Caco-2 (cell line): ENCODE measurements at regions of chr19 and their contacts with region 1.

Region 1: DNA sequence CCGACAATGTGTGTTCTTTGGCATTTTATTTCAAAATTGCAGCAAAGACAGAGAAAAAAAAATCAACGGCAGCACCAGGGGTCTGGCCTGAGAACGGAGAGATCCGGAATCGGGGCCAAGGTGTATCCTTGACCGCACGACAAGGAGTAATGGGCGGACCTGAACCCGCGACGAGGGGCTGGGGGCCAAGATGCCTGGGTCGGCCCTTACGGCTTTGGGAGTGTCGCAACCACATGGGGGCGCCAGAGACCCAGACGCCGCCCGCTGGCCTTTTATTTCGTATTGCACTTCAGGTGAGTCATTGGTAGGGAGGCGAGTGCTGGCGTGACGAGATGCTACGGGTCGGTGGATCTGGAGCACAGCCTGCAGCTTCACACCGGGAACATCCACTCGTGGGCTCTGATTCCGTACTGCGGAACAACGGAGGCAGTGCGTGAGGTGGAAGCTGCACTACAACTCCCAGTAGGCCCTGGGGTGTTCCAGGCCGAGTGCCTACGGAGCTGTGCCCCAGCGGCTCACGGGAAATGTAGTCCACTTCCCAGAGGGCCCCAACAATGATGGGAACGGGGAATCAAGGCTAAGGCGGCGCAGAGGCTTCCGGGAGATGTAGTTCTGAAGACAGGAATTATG is 15.7 kb downstream of the BCAT2 start:
- DNase-seq: peak; percentile 95
- H3K4me3 ChIP-seq: peak overlapping the region; percentile 55
- H3K4me3 Mint-ChIP-seq: peak overlapping the region; percentile 83
- H3K27ac Mint-ChIP-seq: peak overlapping the region; percentile 79
- H3K4me1 ChIP-seq: peaks cover 8% of the 10 kb centered on the region
- H3K4me1 Mint-ChIP-seq: peaks cover 13% of the 10 kb centered on the region
- H3K27me3 ChIP-seq: no peaks in the 10 kb centered on the region
- H3K27me3 Mint-ChIP-seq: no peaks in the 10 kb centered on the region
- CTCF ChIP-seq: peak; percentile 94 to 95

Region 2: DNA sequence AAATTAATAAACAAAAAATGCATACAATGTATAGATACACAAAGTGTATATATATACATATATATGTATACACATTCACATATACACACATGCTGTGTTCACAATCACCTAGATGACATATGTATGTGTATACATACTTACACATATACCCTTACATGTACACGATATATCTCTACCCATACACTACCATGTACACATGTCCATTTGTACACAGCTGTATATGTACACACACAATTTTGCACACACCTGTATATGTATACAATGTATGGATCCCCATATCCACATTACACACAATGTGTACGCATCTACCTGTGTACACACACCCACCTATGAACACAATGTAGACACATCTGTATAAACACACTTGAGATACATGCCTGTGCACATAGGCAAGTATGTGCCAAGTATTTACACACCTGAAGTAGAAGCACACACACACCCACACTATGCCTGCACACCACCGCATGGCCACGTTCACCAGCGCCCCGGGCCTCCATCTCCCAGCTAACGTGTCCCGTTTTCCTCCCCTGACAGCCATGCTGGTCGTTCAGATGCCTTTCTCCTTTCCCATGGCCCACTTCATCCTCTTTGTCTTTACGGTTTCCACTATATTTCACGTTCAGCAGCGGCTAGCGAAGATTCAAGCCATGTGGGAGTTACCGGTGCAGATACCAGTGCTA is 92.6 kb before region 1 on chr19:
- CTCF ChIA-PET with region 1: no interaction called
- POLR2A ChIA-PET with region 1: no interaction called
- intact Hi-C with region 1: no loop called
- DNase-seq: no peak
- H3K4me3 ChIP-seq: no peak overlapping the region
- H3K4me3 Mint-ChIP-seq: no peak overlapping the region
- H3K27ac Mint-ChIP-seq: peak overlapping the region; percentile 30
- H3K4me1 ChIP-seq: no peaks in the 10 kb centered on the region
- H3K4me1 Mint-ChIP-seq: no peaks in the 10 kb centered on the region
- H3K27me3 ChIP-seq: no peaks in the 10 kb centered on the region
- H3K27me3 Mint-ChIP-seq: no peaks in the 10 kb centered on the region
- CTCF ChIP-seq: no peak

Region 3: GRCh38 chr19:48780631-48781391 is 14.4 kb before region 1 on chr19:
- CTCF ChIA-PET with region 1: interaction called, 12 read pairs
- POLR2A ChIA-PET with region 1: no interaction called
- intact Hi-C with region 1: no loop called
- DNase-seq: peak; percentile 77 to 86
- H3K4me3 ChIP-seq: no peak overlapping the region
- H3K4me3 Mint-ChIP-seq: no peak overlapping the region
- H3K27ac Mint-ChIP-seq: peak overlapping the region; percentile 26
- H3K4me1 ChIP-seq: peaks cover 23% of the 10 kb centered on the region
- H3K4me1 Mint-ChIP-seq: peaks cover 18% of the 10 kb centered on the region
- H3K27me3 ChIP-seq: no peaks in the 10 kb centered on the region
- H3K27me3 Mint-ChIP-seq: no peaks in the 10 kb centered on the region
- CTCF ChIP-seq: no peak

Region 4: DNA sequence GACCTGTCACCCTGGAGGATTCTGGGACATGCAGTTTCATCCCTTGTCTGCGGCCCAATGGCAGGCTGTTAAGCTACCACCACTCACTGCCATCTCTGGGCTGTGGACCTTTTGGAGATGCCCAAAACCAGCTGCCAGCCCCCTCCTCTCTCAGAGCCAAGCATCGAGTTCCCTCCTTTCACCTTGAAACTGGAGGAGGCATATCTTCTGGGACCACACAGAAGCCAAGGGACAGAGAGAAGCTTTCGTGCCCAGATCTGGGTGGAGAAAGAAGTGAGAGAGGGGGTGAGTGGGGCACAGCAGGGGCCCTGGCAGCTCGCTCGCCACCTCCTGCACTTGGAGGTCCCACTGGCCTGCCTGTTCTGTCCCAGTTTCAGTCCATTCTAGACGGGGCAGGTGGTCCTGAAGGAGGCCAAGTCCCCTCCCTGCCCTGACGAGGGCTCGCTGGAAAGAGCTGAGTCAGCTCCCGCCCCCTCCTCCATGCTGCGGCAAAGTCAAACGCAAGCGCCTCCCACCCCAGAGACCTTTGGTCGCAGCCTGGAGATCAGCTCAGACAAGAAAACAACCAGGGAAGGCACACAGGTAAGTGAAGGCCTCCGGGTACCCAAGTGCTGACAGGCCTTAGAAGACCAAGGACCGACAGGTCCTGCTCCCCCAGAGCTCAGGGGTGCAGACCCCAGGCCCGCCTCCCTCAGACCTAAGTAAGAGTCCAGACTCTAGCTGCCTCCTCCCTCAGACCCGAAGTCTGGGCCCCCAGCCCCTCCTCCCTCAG is 11.8 kb after region 1 on chr19:
- CTCF ChIA-PET with region 1: interaction called, 77 read pairs
- POLR2A ChIA-PET with region 1: interaction called, 19 read pairs
- intact Hi-C with region 1: loop called (anchors 1 kb)
- DNase-seq: peak; percentile 83 to 85
- H3K4me3 ChIP-seq: peak overlapping the region; percentile 28
- H3K4me3 Mint-ChIP-seq: peak overlapping the region; percentile 30
- H3K27ac Mint-ChIP-seq: peak overlapping the region; percentile 7
- H3K4me1 ChIP-seq: peaks cover 25% of the 10 kb centered on the region
- H3K4me1 Mint-ChIP-seq: peaks cover 30% of the 10 kb centered on the region
- H3K27me3 ChIP-seq: no peaks in the 10 kb centered on the region
- H3K27me3 Mint-ChIP-seq: no peaks in the 10 kb centered on the region
- CTCF ChIP-seq: no peak

Region 5: DNA sequence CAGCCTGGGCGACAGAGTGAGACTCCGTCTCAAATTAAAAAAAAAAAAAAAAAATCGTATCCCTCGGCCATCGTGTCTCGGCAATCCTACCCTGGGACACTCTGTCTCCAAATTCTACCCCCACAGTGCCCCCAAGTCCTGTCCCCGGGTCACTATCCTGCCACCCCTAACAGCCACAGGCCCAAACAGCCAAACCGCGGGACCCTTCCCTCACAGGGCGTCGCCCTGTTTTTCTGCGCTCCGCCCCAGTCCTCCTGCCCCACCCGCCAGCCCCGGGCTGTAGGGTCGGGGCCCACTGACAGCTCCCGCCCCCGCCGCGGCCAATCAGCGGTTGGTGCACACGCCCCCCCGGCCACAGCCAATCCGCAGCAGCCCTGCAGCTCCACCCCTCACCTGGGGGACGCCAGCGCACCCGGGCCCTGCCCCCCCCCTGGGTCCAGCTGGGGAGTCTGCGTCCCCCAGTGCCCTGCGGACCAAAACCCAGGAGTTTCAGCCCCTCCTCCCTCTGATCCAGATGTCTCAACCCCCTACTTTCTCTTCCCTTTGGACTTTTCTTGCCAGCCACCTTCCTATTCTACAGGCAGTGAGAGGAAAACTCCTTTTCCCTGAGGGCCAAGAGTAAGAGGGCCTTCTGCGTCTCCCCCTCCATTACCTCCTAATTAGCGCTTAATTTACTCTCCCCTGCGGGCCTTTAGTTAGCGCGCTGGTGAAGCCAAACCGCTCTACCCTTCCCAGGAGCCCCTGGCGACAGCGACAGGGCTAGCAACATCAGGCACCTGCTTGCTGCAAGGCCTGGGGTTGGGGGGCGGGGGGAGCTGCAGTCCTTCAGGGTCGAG is 17.1 kb after region 1 on chr19:
- CTCF ChIA-PET with region 1: interaction called, 77 read pairs
- POLR2A ChIA-PET with region 1: interaction called, 19 read pairs
- intact Hi-C with region 1: loop called (anchors 1 kb)
- DNase-seq: peak; percentile 89 to 92
- H3K4me3 ChIP-seq: peak overlapping the region; percentile 83
- H3K4me3 Mint-ChIP-seq: peak overlapping the region; percentile 79
- H3K27ac Mint-ChIP-seq: peak overlapping the region; percentile 64
- H3K4me1 ChIP-seq: peaks cover 26% of the 10 kb centered on the region
- H3K4me1 Mint-ChIP-seq: peaks cover 33% of the 10 kb centered on the region
- H3K27me3 ChIP-seq: no peaks in the 10 kb centered on the region
- H3K27me3 Mint-ChIP-seq: no peaks in the 10 kb centered on the region
- CTCF ChIP-seq: no peak

Region 6: DNA sequence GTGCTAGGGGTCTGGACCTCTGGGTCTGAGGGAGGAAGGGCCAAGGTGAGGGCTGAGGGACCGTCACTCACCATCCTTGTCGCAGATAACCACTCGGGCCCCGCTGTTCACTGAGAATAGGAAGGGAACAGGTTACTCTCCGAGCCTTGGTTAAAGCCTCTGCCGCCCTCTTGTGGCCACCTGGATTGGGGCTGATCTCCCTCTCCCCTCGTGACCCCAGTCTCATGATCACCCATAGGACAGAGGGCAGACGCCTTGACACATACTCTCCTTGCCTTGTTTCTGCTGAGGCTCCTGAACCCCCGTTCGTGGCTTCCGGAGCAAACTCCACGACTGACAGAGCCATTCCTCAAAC is 40.5 kb after region 1 on chr19:
- CTCF ChIA-PET with region 1: interaction called, 30 read pairs
- POLR2A ChIA-PET with region 1: interaction called, 3 read pairs
- intact Hi-C with region 1: loop called (anchors 1 kb)
- DNase-seq: peak; percentile 97
- H3K4me3 ChIP-seq: peak overlapping the region; percentile 63
- H3K4me3 Mint-ChIP-seq: peak overlapping the region; percentile 92
- H3K27ac Mint-ChIP-seq: peak overlapping the region; percentile 90
- H3K4me1 ChIP-seq: peaks cover 4% of the 10 kb centered on the region
- H3K4me1 Mint-ChIP-seq: no peaks in the 10 kb centered on the region
- H3K27me3 ChIP-seq: no peaks in the 10 kb centered on the region
- H3K27me3 Mint-ChIP-seq: no peaks in the 10 kb centered on the region
- CTCF ChIP-seq: peak; percentile 93 to 97

Region 7: GRCh38 chr19:48970923-48971395 is 175.8 kb after region 1 on chr19:
- CTCF ChIA-PET with region 1: interaction called, 7 read pairs
- POLR2A ChIA-PET with region 1: interaction called, 3 read pairs
- intact Hi-C with region 1: loop called (anchors 2 kb)
- DNase-seq: peak; percentile 73 to 79
- H3K4me3 ChIP-seq: no peak overlapping the region
- H3K4me3 Mint-ChIP-seq: no peak overlapping the region
- H3K27ac Mint-ChIP-seq: no peak overlapping the region
- H3K4me1 ChIP-seq: peaks cover 12% of the 10 kb centered on the region
- H3K4me1 Mint-ChIP-seq: peaks cover 6% of the 10 kb centered on the region
- H3K27me3 ChIP-seq: no peaks in the 10 kb centered on the region
- H3K27me3 Mint-ChIP-seq: no peaks in the 10 kb centered on the region
- CTCF ChIP-seq: peak; percentile 81 to 88